ENCODE measurements at regions of chr9 and their contacts with region 1.

Region 1: DNA sequence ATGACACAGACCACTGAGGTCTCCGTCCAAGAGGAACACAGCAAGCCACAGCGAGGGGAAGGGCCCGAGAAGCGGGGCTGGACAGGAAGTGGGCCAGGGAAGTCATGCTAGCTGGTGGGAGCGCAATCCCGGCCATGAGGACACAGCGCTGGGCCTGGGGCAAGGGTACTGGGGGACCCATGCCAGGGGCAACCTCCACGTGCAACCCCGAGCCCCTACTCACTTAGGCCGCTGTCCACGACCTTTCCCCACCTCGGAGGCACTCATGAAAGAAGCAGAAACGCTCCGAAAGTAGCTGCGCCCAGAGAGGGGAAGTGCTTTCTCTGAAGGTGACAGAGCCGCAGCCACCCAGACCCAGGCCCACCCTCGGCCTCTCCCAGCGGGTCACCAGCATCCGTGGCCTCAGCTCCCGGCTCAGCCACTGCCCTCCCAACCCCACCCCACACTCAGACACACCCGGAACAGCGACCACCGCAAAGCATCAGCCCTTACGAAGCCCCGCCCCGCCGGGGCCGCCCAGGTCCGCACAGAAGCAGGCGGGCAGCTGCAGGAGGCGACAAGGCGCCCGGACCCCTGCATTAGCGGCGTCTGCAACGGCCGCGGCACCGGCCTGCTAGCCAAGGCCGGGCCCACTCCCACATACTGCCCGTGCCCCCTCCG is 782 bp downstream of the BICD2 start:
- DNase-seq: peak in 12 of 35 experiments; percentile 3 to 46 (median 16)
- ATAC-seq: no peak
- H3K4me3 ChIP-seq: peak overlapping the region; percentile 75 to 96
- H3K4me3 Mint-ChIP-seq: peak overlapping the region; percentile 92 to 95 (median 92)
- H3K27ac ChIP-seq: peak overlapping the region; percentile 48
- H3K27ac Mint-ChIP-seq: peak overlapping the region; percentile 81 to 83
- H3K4me1 ChIP-seq: peaks cover 17 to 55% of the 10 kb centered on the region in 2 experiments
- H3K4me1 Mint-ChIP-seq: peaks cover 56 to 63% (median 56%) of the 10 kb centered on the region in 3 donors
- H3K27me3 ChIP-seq: no peaks in the 10 kb centered on the region
- H3K27me3 Mint-ChIP-seq: no peaks in the 10 kb centered on the region

Region 2: GRCh38 chr9:92781923-92782322 is 18.1 kb after region 1 on chr9:
- CTCF ChIA-PET with region 1: interaction called in 1 of 2 experiments, 11 read pairs
- POLR2A ChIA-PET with region 1: no interaction called
- DNase-seq: no peak
- ATAC-seq: peak; percentile 60 to 90 (median 82)
- H3K4me3 ChIP-seq: no peak overlapping the region
- H3K4me3 Mint-ChIP-seq: no peak overlapping the region
- H3K27ac ChIP-seq: no peak overlapping the region
- H3K27ac Mint-ChIP-seq: peak overlapping the region; percentile 62 to 80
- H3K4me1 ChIP-seq: no peaks in the 10 kb centered on the region
- H3K4me1 Mint-ChIP-seq: peaks cover 0 to 8% (median 6%) of the 10 kb centered on the region in 3 donors
- H3K27me3 ChIP-seq: peaks cover 0 to 2% of the 10 kb centered on the region in 2 experiments
- H3K27me3 Mint-ChIP-seq: peaks cover 0 to 3% of the 10 kb centered on the region in 2 donors

Region 3: GRCh38 chr9:92992549-92992948 is 228.7 kb after region 1 on chr9:
- CTCF ChIA-PET with region 1: no interaction called
- POLR2A ChIA-PET with region 1: no interaction called
- DNase-seq: peak in 1 of 35 experiments; percentile 0
- ATAC-seq: peak in 1 of 4 experiments; percentile 29
- H3K4me3 ChIP-seq: no peak overlapping the region
- H3K4me3 Mint-ChIP-seq: peak overlapping the region in 1 of 3 donors; percentile 18
- H3K27ac ChIP-seq: no peak overlapping the region
- H3K27ac Mint-ChIP-seq: peak overlapping the region; percentile 77 to 85
- H3K4me1 ChIP-seq: peaks cover 11 to 32% of the 10 kb centered on the region in 2 experiments
- H3K4me1 Mint-ChIP-seq: peaks cover 97 to 100% (median 99%) of the 10 kb centered on the region in 3 donors
- H3K27me3 ChIP-seq: no peaks in the 10 kb centered on the region
- H3K27me3 Mint-ChIP-seq: no peaks in the 10 kb centered on the region

Measured in T-cell (primary cell).